Lower leg skin (tissue), 4 donors: ENCODE measurements at regions of chr10 and their contacts with region 1.

Region 1: DNA sequence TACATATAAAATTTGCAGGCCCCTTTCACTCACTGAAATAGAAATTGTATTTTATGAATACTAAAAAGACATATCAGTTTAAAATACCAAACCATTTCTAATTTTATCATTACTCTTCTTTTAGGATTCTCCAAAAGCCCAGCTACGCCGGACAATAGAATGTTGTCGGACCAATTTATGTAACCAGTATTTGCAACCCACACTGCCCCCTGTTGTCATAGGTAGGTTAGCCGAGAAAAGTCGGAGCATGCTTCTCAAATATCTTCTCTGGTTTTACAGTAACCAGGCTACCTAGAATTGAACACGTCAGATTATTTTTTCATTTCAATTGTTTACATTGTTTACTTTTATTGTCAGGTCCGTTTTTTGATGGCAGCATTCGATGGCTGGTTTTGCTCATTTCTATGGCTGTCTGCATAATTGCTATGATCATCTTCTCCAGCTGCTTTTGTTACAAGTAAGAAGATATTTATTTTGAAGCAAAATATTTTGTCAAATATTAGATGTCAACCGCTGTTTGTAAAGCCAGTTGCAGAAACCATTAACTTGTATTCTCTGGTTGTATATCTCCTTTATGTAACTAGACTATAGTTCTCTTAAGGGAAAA is 57.6 kb downstream of the MMRN2 start:
- DNase-seq: peak; percentile 71 to 87
- H3K4me3 ChIP-seq: no peak overlapping the region
- CTCF ChIP-seq: no peak
- POLR2A ChIP-seq: no peak

Region 2: GRCh38 chr10:86693721-86694369 is 205.9 kb before region 1 on chr10:
- intact Hi-C with region 1: loop called (anchors 10 kb)
- DNase-seq: peak; percentile 54 to 91
- H3K4me3 ChIP-seq: no peak overlapping the region
- CTCF ChIP-seq: no peak
- POLR2A ChIP-seq: no peak